Posterior cingulate gyrus (tissue), 11 donors: ENCODE measurements at regions of chr16 and their contacts with region 1.

Region 1: DNA sequence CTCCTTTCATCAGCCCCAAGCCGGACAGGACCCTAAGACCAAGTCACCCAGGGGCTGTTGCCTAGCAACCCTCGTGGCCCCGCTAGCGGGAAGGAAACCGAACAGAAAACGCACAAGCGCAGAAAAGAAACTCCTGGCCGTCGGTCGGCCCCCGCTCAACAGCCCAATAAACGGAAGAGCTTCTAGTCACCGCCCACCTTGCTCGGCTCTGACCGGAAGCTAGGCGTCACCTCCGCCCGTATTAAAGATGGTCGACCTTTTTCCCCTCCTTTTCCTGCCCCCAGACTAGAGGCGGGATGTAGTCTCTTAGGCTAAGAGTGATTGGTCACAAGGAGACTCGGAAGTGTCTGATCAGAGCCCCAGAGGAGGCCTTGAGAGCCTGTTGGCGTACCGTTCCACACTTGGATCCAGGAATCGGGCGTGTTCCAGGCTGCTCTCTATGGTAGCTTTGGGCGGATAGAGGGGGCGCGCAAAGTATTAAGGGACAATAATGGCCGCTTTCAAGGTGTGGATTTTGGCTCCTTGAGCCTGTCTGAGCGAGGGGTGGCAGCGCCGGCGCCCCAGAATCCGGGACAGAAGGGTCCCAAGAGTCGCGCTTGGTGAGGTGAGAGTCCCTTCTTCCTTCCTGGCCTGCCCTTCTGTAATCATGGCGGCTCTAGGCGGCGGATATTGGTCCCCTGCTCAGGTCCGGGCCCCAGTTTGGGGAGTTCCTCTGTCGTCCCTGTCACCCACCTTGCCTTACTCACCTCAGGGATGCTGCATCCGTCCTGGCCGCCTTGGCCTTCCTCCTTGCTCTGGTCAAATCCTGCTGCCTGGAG is at the starts of genes DHX38 and TXNL4B:
- DNase-seq: peak; percentile 91 to 99 (median 95)

Region 2: DNA sequence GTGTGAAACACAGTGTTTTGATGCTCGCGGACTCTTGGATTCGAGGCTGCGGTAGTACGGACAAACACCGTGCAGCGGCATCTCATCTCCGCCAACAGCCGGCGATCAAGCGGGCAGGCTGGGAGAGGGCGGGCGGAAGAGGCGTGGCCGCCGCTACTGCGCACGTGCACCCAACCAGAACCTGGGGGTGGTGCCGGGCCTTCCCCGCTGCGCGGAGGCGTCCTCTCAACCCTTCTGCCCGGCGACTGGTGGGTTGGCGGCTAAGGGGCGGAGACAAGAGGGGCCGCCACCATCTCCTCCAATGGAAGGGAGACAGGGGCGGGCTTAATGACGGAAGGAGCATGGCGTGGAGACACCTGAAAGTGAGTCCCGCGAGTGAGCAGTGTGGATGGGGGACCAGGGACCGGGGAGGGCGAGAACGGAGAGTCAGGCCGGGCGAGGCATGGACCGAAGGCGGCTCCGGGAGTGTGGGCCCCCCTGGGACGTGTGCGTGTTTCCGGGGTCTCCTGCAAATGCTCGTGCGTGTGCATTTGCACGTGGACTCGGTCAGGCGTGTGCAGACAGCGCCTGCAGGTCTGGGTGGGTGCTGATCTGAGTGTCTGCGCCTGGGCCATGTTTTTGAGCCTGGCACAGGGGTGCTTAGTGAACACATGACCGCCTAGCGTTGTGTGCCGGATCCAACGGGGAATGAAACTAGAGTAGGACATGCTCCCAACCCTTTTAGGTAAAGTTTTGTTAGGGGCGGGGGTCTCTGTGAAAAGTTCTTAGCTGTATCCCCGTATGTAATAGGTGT is 85.0 kb before region 1 on chr16 and contains the start of gene DHODH:
- intact Hi-C with region 1: loop called (anchors 2 kb)
- DNase-seq: peak; percentile 97 to 100 (median 98)